ENCODE measurements at regions of chr7 and their contacts with region 1.

Region 1: GRCh38 chr7:143321734-143322133 is 5.8 kb downstream of the CLCN1 start:
- DNase-seq: peak in 1 of 2 experiments; percentile 13
- H3K4me3 ChIP-seq: no peak overlapping the region
- H3K4me3 Mint-ChIP-seq: no peak overlapping the region
- H3K27ac Mint-ChIP-seq: no peak overlapping the region
- H3K4me1 ChIP-seq: peaks cover 8% of the 10 kb centered on the region
- H3K4me1 Mint-ChIP-seq: peaks cover 13% of the 10 kb centered on the region
- H3K27me3 ChIP-seq: no peaks in the 10 kb centered on the region
- H3K27me3 Mint-ChIP-seq: no peaks in the 10 kb centered on the region
- CTCF ChIP-seq: no peak

Region 2: GRCh38 chr7:143355450-143356385 is 34.0 kb after region 1 on chr7:
- CTCF ChIA-PET with region 1: no interaction called
- POLR2A ChIA-PET with region 1: no interaction called
- intact Hi-C with region 1: no loop called
- DNase-seq: no peak
- H3K4me3 ChIP-seq: no peak overlapping the region
- H3K4me3 Mint-ChIP-seq: no peak overlapping the region
- H3K27ac Mint-ChIP-seq: no peak overlapping the region
- H3K4me1 ChIP-seq: peaks cover 18% of the 10 kb centered on the region
- H3K4me1 Mint-ChIP-seq: peaks cover 20% of the 10 kb centered on the region
- H3K27me3 ChIP-seq: no peaks in the 10 kb centered on the region
- H3K27me3 Mint-ChIP-seq: peaks cover 3% of the 10 kb centered on the region
- CTCF ChIP-seq: no peak

Region 3: GRCh38 chr7:143373255-143373794 is 51.6 kb after region 1 on chr7:
- CTCF ChIA-PET with region 1: no interaction called
- POLR2A ChIA-PET with region 1: interaction called, 3 read pairs
- intact Hi-C with region 1: loop called (anchors 1 kb)
- DNase-seq: peak in 1 of 2 experiments; percentile 70
- H3K4me3 ChIP-seq: no peak overlapping the region
- H3K4me3 Mint-ChIP-seq: no peak overlapping the region
- H3K27ac Mint-ChIP-seq: no peak overlapping the region
- H3K4me1 ChIP-seq: peaks cover 39% of the 10 kb centered on the region
- H3K4me1 Mint-ChIP-seq: peaks cover 40% of the 10 kb centered on the region
- H3K27me3 ChIP-seq: no peaks in the 10 kb centered on the region
- H3K27me3 Mint-ChIP-seq: no peaks in the 10 kb centered on the region
- CTCF ChIP-seq: peak; percentile 34 to 75

Region 4: GRCh38 chr7:143434660-143435059 is 112.9 kb after region 1 on chr7:
- CTCF ChIA-PET with region 1: no interaction called
- POLR2A ChIA-PET with region 1: no interaction called
- intact Hi-C with region 1: no loop called
- DNase-seq: no peak
- H3K4me3 ChIP-seq: no peak overlapping the region
- H3K4me3 Mint-ChIP-seq: no peak overlapping the region
- H3K27ac Mint-ChIP-seq: no peak overlapping the region
- H3K4me1 ChIP-seq: no peaks in the 10 kb centered on the region
- H3K4me1 Mint-ChIP-seq: no peaks in the 10 kb centered on the region
- H3K27me3 ChIP-seq: no peaks in the 10 kb centered on the region
- H3K27me3 Mint-ChIP-seq: no peaks in the 10 kb centered on the region
- CTCF ChIP-seq: no peak